ENCODE measurements at regions of chr5 and their contacts with region 1.

Region 1: DNA sequence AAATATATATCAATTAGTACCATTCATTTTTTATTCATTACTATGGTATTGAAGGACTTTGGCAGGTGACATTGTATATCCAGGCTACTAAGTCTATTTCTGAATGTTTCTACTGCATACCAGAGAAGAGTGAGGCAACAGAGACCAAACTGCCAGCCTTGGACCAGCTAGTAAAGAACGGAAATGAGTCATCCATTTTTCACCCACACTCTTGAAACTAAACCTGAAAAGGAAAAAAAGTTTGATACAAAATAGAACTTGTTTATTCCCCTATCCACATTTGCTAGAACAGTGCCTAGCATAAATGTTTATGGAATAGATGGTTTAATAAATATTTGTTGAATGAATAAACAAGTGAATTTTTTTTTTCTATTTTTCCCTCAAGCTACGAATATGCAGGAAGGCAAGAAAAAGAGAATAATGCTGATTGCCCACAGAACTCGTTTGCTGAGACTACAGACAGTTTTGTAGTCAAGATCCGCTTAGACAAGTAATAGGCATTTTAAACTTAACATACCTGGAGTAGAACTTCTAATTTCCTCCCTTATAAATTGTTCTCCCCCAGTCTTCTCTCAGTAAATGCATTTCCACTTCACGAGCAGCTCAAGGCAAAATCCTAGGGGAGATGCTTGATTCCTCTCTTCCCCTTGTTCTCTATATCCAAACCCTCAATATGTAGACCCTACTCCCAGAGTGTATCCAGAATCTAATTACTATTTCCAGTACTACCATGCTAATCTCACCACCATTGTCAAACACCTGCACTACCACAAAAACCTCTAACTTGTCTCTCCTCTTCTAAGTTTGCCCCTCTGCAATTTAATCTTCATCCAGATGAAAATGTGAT is 146.2 kb upstream of the RASA1 start:
- DNase-seq: peak; percentile 88
- H3K4me3 ChIP-seq: peak overlapping the region in 2 of 3 experiments; percentile 19 to 24
- H3K27ac ChIP-seq: peak overlapping the region; percentile 96
- H3K4me1 ChIP-seq: peaks cover 63% of the 10 kb centered on the region
- H3K27me3 ChIP-seq: no peaks in the 10 kb centered on the region
- CTCF ChIP-seq: no peak

Region 2: DNA sequence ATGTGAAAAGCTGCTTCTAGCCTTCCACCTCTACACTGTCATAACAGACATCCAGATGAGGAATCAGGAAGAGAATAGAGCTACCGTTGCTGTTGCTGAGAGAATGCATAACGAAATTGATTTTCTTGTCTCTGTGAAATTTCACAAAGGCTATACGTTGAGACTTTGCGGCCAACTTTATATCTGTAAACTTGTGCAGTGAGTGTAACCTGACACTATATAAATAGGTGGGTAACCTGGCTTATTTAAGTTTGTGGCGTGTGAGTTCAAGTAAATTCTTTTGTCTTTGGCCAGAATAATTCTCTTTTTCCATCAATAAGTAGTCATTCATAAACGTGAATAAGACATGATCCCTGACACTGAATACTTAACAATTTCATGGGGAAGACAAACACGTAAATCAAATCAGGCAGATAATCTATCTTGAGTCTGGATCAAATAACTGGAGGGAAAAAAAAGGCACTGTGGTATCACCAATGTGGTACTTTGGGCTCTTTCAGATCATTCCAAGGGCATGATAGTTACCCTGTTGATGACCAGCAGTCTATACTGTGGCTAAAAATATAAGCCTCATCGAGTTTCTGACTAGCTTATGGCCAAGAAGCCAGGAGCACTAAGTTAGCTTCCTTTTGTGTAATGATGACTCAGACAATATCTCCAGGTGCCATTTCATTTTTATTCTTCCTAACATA is 47.9 kb after region 1 on chr5:
- CTCF ChIA-PET with region 1: interaction called, 14 read pairs
- dilution Hi-C with region 1: no loop called
- in situ Hi-C with region 1: no loop called
- intact Hi-C with region 1: no loop called
- DNase-seq: peak; percentile 11
- H3K4me3 ChIP-seq: no peak overlapping the region
- H3K27ac ChIP-seq: no peak overlapping the region
- H3K4me1 ChIP-seq: no peaks in the 10 kb centered on the region
- H3K27me3 ChIP-seq: no peaks in the 10 kb centered on the region
- CTCF ChIP-seq: no peak

Measured in mammary epithelial cell (primary cell).